ENCODE measurements at regions of chr10 and their contacts with region 1.

Region 1: GRCh38 chr10:75948583-75948982 is 517.2 kb downstream of the LRMDA start:
- DNase-seq: no peak
- ATAC-seq: no peak

Region 2: GRCh38 chr10:75980419-75981002 is 31.9 kb after region 1 on chr10:
- intact Hi-C with region 1: loop called (anchors 2 kb)
- DNase-seq: no peak
- ATAC-seq: no peak

Region 3: DNA sequence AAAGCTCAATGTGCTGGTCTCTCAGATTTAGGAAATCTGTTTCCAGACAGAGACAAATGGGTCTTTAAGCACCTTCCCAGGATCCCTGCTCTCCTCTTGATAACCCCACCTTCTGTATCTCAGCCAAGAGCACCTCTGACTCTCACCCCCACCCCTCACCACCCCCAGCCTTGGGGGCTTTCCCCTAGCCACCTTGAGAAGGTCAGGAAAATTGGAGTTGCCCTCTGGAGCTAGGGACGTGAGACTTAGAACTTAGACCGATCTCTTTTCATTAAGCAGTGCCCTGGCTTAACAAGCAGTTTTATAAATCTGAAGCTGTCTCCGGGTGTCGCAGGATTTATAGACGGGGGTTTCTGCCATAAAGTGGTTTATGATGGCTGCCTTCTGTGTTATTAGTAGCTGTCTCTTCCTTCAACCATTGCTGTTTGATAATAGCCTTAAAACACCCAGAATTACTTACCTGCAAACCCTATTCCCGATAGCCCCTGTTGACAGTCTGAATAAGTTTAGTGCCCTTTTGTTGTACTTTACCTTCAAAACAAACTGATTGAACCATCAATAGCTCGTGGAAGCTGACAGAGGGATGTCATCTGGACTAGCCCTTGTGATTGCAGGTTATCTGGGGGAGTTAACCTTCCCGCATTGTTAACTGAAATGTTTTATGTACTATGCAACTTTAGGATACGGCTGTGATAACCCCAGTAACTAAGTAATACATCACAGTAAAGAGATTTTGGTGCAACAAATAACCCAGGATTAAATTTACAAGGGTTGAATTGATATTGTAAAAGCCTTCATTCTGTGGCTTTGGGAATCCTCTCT is 104.3 kb after region 1 on chr10:
- intact Hi-C with region 1: no loop called
- DNase-seq: no peak
- ATAC-seq: no peak

Measured in sciatic nerve (tissue), 2 donors.